Endothelial cell of umbilical vein (primary cell): ENCODE measurements at regions of chr17 and their contacts with region 1.

Region 1: GRCh38 chr17:44581868-44582267 is 24.6 kb downstream of the FZD2 start:
- DNase-seq: peak; percentile 34
- H3K4me3 ChIP-seq: no peak overlapping the region
- H3K27ac ChIP-seq: no peak overlapping the region
- H3K4me1 ChIP-seq: no peaks in the 10 kb centered on the region
- H3K27me3 ChIP-seq: peaks cover 11 to 13% of the 10 kb centered on the region in 2 experiments
- CTCF ChIP-seq: peak in 1 of 2 donors; percentile 45
- POLR2A ChIP-seq: no peak

Region 2: GRCh38 chr17:44599298-44600175 is 17.7 kb after region 1 on chr17:
- CTCF ChIA-PET with region 1: interaction called, 4 read pairs
- POLR2A ChIA-PET with region 1: no interaction called
- dilution Hi-C with region 1: no loop called
- intact Hi-C with region 1: loop called (anchors 2 kb)
- DNase-seq: peak; percentile 96
- H3K4me3 ChIP-seq: no peak overlapping the region
- H3K27ac ChIP-seq: no peak overlapping the region
- H3K4me1 ChIP-seq: peaks cover 19% of the 10 kb centered on the region
- H3K27me3 ChIP-seq: no peaks in the 10 kb centered on the region
- CTCF ChIP-seq: no peak
- POLR2A ChIP-seq: peak; percentile 42

Region 3: GRCh38 chr17:44636562-44636961 is 54.7 kb after region 1 on chr17:
- CTCF ChIA-PET with region 1: interaction called, 14 read pairs
- POLR2A ChIA-PET with region 1: no interaction called
- dilution Hi-C with region 1: no loop called
- intact Hi-C with region 1: no loop called
- DNase-seq: peak; percentile 60
- H3K4me3 ChIP-seq: no peak overlapping the region
- H3K27ac ChIP-seq: no peak overlapping the region
- H3K4me1 ChIP-seq: no peaks in the 10 kb centered on the region
- H3K27me3 ChIP-seq: peaks cover 2 to 9% of the 10 kb centered on the region in 2 experiments
- CTCF ChIP-seq: peak in 1 of 2 donors; percentile 4
- POLR2A ChIP-seq: no peak

Region 4: GRCh38 chr17:44672479-44673093 is 90.7 kb after region 1 on chr17:
- CTCF ChIA-PET with region 1: interaction called, 4 read pairs
- POLR2A ChIA-PET with region 1: no interaction called
- dilution Hi-C with region 1: no loop called
- intact Hi-C with region 1: loop called (anchors 5 kb)
- DNase-seq: peak; percentile 44
- H3K4me3 ChIP-seq: no peak overlapping the region
- H3K27ac ChIP-seq: no peak overlapping the region
- H3K4me1 ChIP-seq: peaks cover 10% of the 10 kb centered on the region
- H3K27me3 ChIP-seq: peaks cover 0 to 2% of the 10 kb centered on the region in 2 experiments
- CTCF ChIP-seq: peak; percentile 35 to 46
- POLR2A ChIP-seq: no peak

Region 5: DNA sequence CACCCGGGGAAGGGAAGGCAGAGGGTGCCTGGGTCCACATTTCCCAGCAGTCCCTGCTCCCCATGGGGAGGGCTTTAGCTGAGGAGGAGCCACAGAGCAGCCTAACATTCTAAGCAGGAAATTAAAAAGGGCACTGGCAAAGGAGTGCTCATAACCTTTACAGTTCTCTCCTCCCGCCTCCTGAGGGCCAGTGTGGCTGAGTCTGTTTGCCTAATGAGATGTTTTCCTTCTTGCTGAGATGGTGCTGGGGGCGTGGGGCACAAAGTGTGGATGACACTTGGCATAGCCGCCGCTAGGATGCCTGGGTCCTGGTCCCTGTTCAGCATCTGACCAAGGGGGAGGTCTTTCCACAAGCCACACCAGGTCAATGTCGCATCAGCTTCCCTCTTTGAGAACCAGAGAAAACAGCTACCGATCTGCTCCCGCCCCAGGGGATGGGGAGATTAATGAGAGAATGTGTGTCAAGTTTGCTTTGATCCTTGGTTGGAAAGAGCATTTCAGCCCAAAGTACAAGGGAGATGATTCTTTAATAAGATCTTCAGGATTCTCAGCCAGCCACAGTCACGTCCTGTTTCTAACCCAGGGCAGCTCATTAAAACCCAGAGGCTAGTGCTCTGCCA is 360.0 kb after region 1 on chr17:
- CTCF ChIA-PET with region 1: no interaction called
- POLR2A ChIA-PET with region 1: no interaction called
- dilution Hi-C with region 1: no loop called
- intact Hi-C with region 1: no loop called
- DNase-seq: no peak
- H3K4me3 ChIP-seq: no peak overlapping the region
- H3K27ac ChIP-seq: no peak overlapping the region
- H3K4me1 ChIP-seq: peaks cover 5% of the 10 kb centered on the region
- H3K27me3 ChIP-seq: no peaks in the 10 kb centered on the region
- CTCF ChIP-seq: no peak
- POLR2A ChIP-seq: no peak